Natural killer cell (primary cell): ENCODE measurements at regions of chr3 and their contacts with region 1.

Region 1: DNA sequence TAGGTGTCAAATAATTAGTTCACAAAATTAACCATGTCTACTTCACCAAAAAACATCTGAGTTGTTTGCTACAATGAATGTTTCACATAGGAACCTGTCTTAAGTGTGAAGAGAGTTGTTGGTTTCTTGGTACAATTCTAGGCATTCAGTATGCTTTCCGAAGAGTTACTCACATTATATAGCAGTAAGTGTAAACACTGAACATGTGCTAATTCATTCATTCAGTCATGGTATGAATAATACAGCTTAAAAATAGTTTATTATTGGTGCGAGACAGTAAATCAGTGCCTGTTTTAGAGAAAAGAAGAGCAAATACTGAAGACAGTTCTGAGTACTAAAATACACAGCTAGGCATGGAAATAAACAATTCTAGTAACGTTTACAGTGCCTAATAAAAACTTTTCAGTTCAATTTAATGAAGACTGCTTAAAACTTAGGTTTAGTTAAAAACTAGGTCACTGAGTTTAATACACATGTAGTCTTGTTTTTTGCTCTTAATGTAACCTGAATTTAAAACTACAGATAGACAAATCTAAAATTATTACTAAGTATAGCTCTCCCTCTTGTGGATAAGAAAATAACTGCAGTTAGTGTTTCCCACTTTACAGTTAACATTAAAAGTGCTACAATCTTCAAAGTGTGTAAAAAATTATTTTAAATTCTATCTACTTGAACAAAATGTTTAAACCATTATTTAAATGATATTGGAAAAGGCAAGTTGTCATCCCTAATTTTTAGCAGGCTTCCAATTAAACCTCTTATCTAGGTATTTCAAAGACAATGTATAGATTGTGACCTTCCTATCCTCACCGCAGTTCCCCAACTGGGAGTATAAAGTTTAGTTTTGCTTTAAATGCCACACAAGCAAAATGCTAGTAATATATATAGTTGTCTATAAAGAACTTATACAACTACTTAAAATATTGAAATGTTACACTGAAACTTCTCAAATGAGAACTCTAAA is 20.1 kb upstream of the ZCWPW2 start:
- DNase-seq: peak in 1 of 2 donors; percentile 74
- ATAC-seq: peak; percentile 30 to 58 (median 34)
- H3K4me3 ChIP-seq: no peak overlapping the region
- H3K4me3 Mint-ChIP-seq: peak overlapping the region; percentile 50
- H3K27ac ChIP-seq: no peak overlapping the region
- H3K27ac Mint-ChIP-seq: peak overlapping the region; percentile 59 to 79
- H3K4me1 ChIP-seq: no peaks in the 10 kb centered on the region
- H3K4me1 Mint-ChIP-seq: peaks cover 36 to 44% of the 10 kb centered on the region in 2 donors
- H3K27me3 ChIP-seq: no peaks in the 10 kb centered on the region
- H3K27me3 Mint-ChIP-seq: no peaks in the 10 kb centered on the region
- CTCF ChIP-seq: peak; percentile 90

Region 2: DNA sequence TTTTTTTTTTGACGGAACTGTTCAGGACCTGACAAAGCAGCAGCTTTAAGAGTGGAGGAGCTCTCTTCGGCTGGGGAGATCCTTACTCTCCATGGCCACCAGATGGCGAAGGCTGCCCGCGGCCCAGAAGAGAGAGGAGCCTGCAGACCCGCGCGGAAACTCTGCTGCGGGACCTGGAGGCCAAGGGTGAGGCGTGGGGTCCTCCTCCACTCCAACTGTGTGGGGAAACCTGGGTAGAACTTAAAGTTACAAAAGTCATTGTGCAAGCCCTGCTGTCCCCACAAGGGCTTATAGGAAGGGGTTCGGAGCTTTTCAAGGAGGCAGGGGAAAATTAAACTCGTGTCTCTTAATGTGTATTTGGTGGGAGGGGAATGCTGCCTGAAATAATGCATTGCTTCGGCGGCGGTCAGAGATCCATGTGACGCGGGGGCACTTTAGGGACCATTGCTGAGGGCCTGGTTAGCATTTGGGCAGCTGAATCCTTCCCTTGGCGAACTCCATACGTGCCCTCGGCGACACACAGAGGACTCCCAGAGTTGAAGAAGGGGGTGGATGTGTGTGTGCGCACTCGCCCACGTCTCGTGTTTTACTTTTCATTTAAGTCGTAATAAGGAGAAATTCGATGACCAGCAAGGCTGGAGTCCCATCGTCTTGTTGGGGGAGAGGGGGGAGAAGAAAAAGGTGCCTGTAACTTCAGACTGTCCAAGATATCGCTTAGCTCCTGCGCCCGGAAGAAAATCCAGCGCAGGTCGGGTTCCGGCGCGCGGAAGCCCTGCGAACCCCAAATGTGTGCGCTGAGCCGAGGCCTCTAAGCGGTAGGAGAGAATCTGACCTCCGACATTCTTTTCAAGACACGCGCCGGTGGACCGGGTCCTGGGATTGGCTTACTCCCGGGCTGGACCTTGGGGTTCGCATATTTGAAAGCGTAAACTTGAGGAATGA is 616.1 kb before region 1 on chr3:
- intact Hi-C with region 1: loop called (anchors 1 kb)
- DNase-seq: peak; percentile 72 to 90
- ATAC-seq: peak; percentile 84 to 91 (median 87)
- H3K4me3 ChIP-seq: peak overlapping the region; percentile 50
- H3K4me3 Mint-ChIP-seq: peak overlapping the region; percentile 100
- H3K27ac ChIP-seq: peak overlapping the region; percentile 81
- H3K27ac Mint-ChIP-seq: peak overlapping the region; percentile 93 to 98
- H3K4me1 ChIP-seq: peaks cover 34% of the 10 kb centered on the region
- H3K4me1 Mint-ChIP-seq: peaks cover 56 to 58% of the 10 kb centered on the region in 2 donors
- H3K27me3 ChIP-seq: no peaks in the 10 kb centered on the region
- H3K27me3 Mint-ChIP-seq: no peaks in the 10 kb centered on the region
- CTCF ChIP-seq: peak; percentile 84

Region 3: GRCh38 chr3:27900316-27900715 is 428.2 kb before region 1 on chr3:
- intact Hi-C with region 1: loop called (anchors 2 kb)
- DNase-seq: peak; percentile 32 to 64
- ATAC-seq: peak; percentile 79 to 91 (median 83)
- H3K4me3 ChIP-seq: no peak overlapping the region
- H3K4me3 Mint-ChIP-seq: peak overlapping the region; percentile 78
- H3K27ac ChIP-seq: no peak overlapping the region
- H3K27ac Mint-ChIP-seq: peak overlapping the region; percentile 64 to 72
- H3K4me1 ChIP-seq: peaks cover 18% of the 10 kb centered on the region
- H3K4me1 Mint-ChIP-seq: peaks cover 60 to 68% of the 10 kb centered on the region in 2 donors
- H3K27me3 ChIP-seq: no peaks in the 10 kb centered on the region
- H3K27me3 Mint-ChIP-seq: peaks cover 2 to 9% of the 10 kb centered on the region in 2 donors
- CTCF ChIP-seq: no peak

Region 4: DNA sequence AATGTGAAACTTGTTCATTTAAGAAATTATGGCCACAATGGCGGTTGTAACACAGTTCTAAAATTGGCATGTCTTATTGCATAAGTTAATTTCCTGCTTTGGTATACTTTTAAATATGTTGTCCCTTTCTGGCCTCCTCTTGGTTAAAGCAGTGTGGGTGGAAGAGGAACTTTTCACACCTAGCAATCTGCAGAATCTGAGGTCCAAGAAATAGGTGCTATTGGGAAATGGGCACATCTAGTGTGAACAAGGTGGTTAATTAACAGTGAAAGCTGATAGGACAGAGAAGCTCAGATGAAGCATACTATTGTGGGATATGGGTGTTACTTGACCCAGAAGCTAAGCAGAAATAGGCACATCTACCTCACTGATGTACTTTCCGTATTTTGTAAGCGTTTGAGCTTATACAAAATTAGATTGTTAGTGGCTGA is 76.5 kb before region 1 on chr3:
- intact Hi-C with region 1: loop called (anchors 1 kb)
- DNase-seq: peak in 1 of 2 donors; percentile 74
- ATAC-seq: peak; percentile 87 to 94 (median 93)
- H3K4me3 ChIP-seq: no peak overlapping the region
- H3K4me3 Mint-ChIP-seq: peak overlapping the region; percentile 80
- H3K27ac ChIP-seq: peak overlapping the region; percentile 63
- H3K27ac Mint-ChIP-seq: peak overlapping the region; percentile 75 to 89
- H3K4me1 ChIP-seq: peaks cover 29% of the 10 kb centered on the region
- H3K4me1 Mint-ChIP-seq: peaks cover 57 to 60% of the 10 kb centered on the region in 2 donors
- H3K27me3 ChIP-seq: no peaks in the 10 kb centered on the region
- H3K27me3 Mint-ChIP-seq: no peaks in the 10 kb centered on the region
- CTCF ChIP-seq: no peak

Region 5: GRCh38 chr3:28317438-28318022 is 10.9 kb before region 1 on chr3:
- intact Hi-C with region 1: loop called (anchors 1 kb)
- DNase-seq: peak in 1 of 2 donors; percentile 82
- ATAC-seq: peak; percentile 96 to 100 (median 100)
- H3K4me3 ChIP-seq: no peak overlapping the region
- H3K4me3 Mint-ChIP-seq: no peak overlapping the region
- H3K27ac ChIP-seq: no peak overlapping the region
- H3K27ac Mint-ChIP-seq: peak overlapping the region; percentile 12 to 46
- H3K4me1 ChIP-seq: peaks cover 8% of the 10 kb centered on the region
- H3K4me1 Mint-ChIP-seq: peaks cover 44 to 53% of the 10 kb centered on the region in 2 donors
- H3K27me3 ChIP-seq: no peaks in the 10 kb centered on the region
- H3K27me3 Mint-ChIP-seq: no peaks in the 10 kb centered on the region
- CTCF ChIP-seq: peak; percentile 88